ENCODE measurements at regions of chr6 and their contacts with region 1.

Region 1: GRCh38 chr6:69866770-69867638 is 648 bp downstream of the COL19A1 start:
- DNase-seq: peak; percentile 48
- ATAC-seq: peak; percentile 75
- H3K4me3 ChIP-seq: peak overlapping the region; percentile 79
- H3K27ac ChIP-seq: peak overlapping the region; percentile 92
- H3K4me1 ChIP-seq: peaks cover 7% of the 10 kb centered on the region; the same call in 1 of the 2 replicates
- H3K27me3 ChIP-seq: no peaks in the 10 kb centered on the region
- CTCF ChIP-seq: peak; percentile 26 to 31 (median 27); a peak in 4 of 6 replicates
- EP300 ChIP-seq: 0 out of 4 replicates have a peak, but pooled peaks of 1 of the 2 experiments have one; percentile 23
- POLR2A ChIP-seq: peak; percentile 87
- RAD21 ChIP-seq: peak; percentile 56

Region 2: DNA sequence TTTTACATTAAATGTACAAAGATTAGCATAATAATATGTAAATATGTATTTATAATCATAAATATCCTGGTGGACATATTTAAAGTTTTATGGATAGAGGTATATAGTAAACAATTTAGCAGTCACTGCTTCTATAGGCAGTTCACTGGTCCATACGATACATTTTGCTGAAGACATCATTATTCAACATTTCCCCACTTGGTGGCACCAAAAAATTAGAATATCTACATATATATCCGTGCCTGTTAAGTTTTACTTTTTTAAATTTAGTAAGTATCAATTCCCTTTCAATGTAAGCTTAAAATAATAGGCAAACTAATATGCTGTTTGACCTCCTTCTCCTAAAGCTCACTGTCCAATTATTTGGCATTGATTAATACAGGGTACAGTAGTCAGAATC is 134.4 kb before region 1 on chr6:
- CTCF ChIA-PET with region 1: interaction called, 6 read pairs
- POLR2A ChIA-PET with region 1: no interaction called
- RAD21 ChIA-PET with region 1: interaction called, 8 read pairs
- SMC1A ChIA-PET with region 1: interaction called, 14 read pairs
- in situ Hi-C with region 1: no loop called
- intact Hi-C with region 1: loop called (anchors 5 kb)
- DNase-seq: peak; percentile 11
- ATAC-seq: peak; percentile 90
- H3K4me3 ChIP-seq: no peak overlapping the region
- H3K27ac ChIP-seq: no peak overlapping the region
- H3K4me1 ChIP-seq: no peaks in the 10 kb centered on the region
- H3K27me3 ChIP-seq: no peaks in the 10 kb centered on the region
- CTCF ChIP-seq: peak; percentile 10 to 48 (median 29); a peak in 3 of 6 replicates
- EP300 ChIP-seq: no peak
- POLR2A ChIP-seq: no peak
- RAD21 ChIP-seq: peak; percentile 47

Region 3: GRCh38 chr6:69796642-69797390 is 70.2 kb before region 1 on chr6 and contains the start of gene LMBRD1:
- CTCF ChIA-PET with region 1: interaction called, 24 read pairs
- POLR2A ChIA-PET with region 1: interaction called, 13 read pairs
- RAD21 ChIA-PET with region 1: interaction called, 39 read pairs
- SMC1A ChIA-PET with region 1: interaction called, 10 read pairs
- in situ Hi-C with region 1: no loop called
- intact Hi-C with region 1: loop called (anchors 5 kb)
- DNase-seq: peak; percentile 91
- ATAC-seq: peak; percentile 91
- H3K4me3 ChIP-seq: peak within 1 kb of the TSS; percentile 80
- H3K27ac ChIP-seq: peak within 1 kb of the TSS; percentile 85
- H3K4me1 ChIP-seq: peaks cover 13% of the 10 kb centered on the region
- H3K27me3 ChIP-seq: no peaks in the 10 kb centered on the region
- CTCF ChIP-seq: peak; percentile 97 to 100 (median 99); a peak in 5 of 6 replicates
- EP300 ChIP-seq: 0 out of 4 replicates have a peak, but pooled peaks of 1 of the 2 experiments have one; percentile 5
- POLR2A ChIP-seq: peak; percentile 83
- RAD21 ChIP-seq: no peak
- polyA plus RNA-seq, gene LMBRD1: 43.2 to 82.1 TPM

Region 4: GRCh38 chr6:69843189-69843588 is 23.8 kb before region 1 on chr6:
- CTCF ChIA-PET with region 1: interaction called, 20 read pairs
- POLR2A ChIA-PET with region 1: interaction called, 5 read pairs
- RAD21 ChIA-PET with region 1: interaction called, 21 read pairs
- SMC1A ChIA-PET with region 1: interaction called, 79 read pairs
- in situ Hi-C with region 1: no loop called
- intact Hi-C with region 1: no loop called
- DNase-seq: no peak
- ATAC-seq: peak; percentile 80
- H3K4me3 ChIP-seq: no peak overlapping the region
- H3K27ac ChIP-seq: no peak overlapping the region
- H3K4me1 ChIP-seq: no peaks in the 10 kb centered on the region
- H3K27me3 ChIP-seq: no peaks in the 10 kb centered on the region
- CTCF ChIP-seq: no peak
- EP300 ChIP-seq: peak; percentile 5 to 48; a peak in 1 of 4 replicates
- POLR2A ChIP-seq: no peak
- RAD21 ChIP-seq: no peak

Region 5: DNA sequence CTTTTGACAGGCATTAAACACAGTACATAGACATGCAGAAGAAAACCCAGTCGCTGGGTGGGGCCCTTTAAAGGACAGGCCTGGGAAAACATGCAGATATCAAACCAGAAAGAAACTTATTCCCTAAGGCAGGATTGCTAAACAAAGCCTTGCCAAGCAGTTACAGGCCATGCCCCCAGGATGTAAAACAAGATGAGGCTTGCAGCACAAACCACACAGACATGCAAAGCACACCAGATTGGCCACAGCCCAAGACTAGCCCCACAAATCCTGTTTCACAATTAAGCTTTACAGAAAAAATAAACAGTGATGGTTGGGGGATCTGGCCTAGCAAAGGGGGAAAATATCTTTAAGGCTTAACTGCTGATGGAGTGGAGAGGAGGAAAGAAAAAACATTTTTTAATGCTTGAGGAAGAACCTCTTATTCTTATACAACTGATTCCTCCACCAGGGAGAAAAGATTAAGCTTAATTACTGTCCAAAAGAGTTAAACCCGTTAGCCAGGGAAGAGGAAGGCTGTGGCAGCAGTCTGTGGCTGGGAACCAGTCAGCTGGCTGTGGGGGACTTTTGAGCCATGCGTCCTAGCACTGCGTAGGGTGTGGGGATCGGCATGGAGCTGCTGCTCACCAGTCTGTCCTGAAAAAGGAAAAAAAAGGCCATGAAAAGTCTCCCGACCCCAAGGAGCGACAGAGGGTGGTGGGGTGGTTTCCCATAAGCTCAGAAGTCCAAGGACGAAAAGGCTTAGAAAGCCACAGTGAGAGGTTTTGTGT is 27.8 kb after region 1 on chr6:
- CTCF ChIA-PET with region 1: interaction called, 18 read pairs
- POLR2A ChIA-PET with region 1: interaction called, 17 read pairs
- RAD21 ChIA-PET with region 1: interaction called, 52 read pairs
- SMC1A ChIA-PET with region 1: interaction called, 29 read pairs
- in situ Hi-C with region 1: no loop called
- intact Hi-C with region 1: loop called (anchors 1 kb)
- DNase-seq: peak; percentile 62
- ATAC-seq: peak; percentile 91
- H3K4me3 ChIP-seq: 0 out of 2 replicates have a peak overlapping the region, but pooled peaks have one; percentile 25
- H3K27ac ChIP-seq: peak overlapping the region; percentile 86
- H3K4me1 ChIP-seq: peaks cover 11% of the 10 kb centered on the region; the same call in 1 of the 2 replicates
- H3K27me3 ChIP-seq: no peaks in the 10 kb centered on the region
- CTCF ChIP-seq: no peak
- EP300 ChIP-seq: no peak
- POLR2A ChIP-seq: peak; percentile 41; the same call in 1 of the 2 replicates
- RAD21 ChIP-seq: no peak

Region 6: GRCh38 chr6:70456735-70457134 is 589.7 kb after region 1 on chr6:
- CTCF ChIA-PET with region 1: no interaction called
- POLR2A ChIA-PET with region 1: no interaction called
- RAD21 ChIA-PET with region 1: no interaction called
- SMC1A ChIA-PET with region 1: no interaction called
- in situ Hi-C with region 1: no loop called
- intact Hi-C with region 1: no loop called
- DNase-seq: no peak
- ATAC-seq: no peak
- H3K4me3 ChIP-seq: no peak overlapping the region
- H3K27ac ChIP-seq: no peak overlapping the region
- H3K4me1 ChIP-seq: no peaks in the 10 kb centered on the region
- H3K27me3 ChIP-seq: no peaks in the 10 kb centered on the region
- CTCF ChIP-seq: no peak
- EP300 ChIP-seq: no peak
- POLR2A ChIP-seq: no peak
- RAD21 ChIP-seq: no peak

Measured in GM12878 (cell line).